Endothelial cell of umbilical vein (primary cell): ENCODE measurements at regions of chr1 and their contacts with region 1.

Region 1: GRCh38 chr1:104322131-104322530 is 572.4 kb downstream of the AMY1C start:
- DNase-seq: no peak
- H3K4me3 ChIP-seq: no peak overlapping the region
- H3K27ac ChIP-seq: no peak overlapping the region
- H3K4me1 ChIP-seq: no peaks in the 10 kb centered on the region
- H3K27me3 ChIP-seq: no peaks in the 10 kb centered on the region
- CTCF ChIP-seq: no peak
- POLR2A ChIP-seq: no peak

Region 2: DNA sequence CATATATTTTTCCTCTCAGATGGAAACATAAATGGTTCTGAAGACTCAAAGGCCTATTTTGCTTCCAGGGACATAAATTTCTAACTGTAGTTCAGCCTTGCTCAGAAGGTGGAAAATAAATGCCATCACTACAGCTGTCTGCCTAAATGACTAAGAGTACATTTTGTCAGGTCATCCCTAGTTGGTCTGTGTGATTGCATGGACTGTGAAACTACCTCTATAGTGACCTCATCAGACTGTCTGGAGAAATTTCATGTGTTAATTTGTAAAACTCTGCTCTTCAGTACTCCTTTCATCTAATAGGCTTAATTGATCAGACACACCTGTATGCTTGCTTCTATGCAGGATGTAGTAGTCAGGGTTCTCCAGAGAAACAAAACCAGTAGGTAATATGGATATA is 314.4 kb after region 1 on chr1:
- CTCF ChIA-PET with region 1: no interaction called
- POLR2A ChIA-PET with region 1: no interaction called
- dilution Hi-C with region 1: no loop called
- intact Hi-C with region 1: loop called (anchors 10 kb)
- DNase-seq: no peak
- H3K4me3 ChIP-seq: no peak overlapping the region
- H3K27ac ChIP-seq: no peak overlapping the region
- H3K4me1 ChIP-seq: no peaks in the 10 kb centered on the region
- H3K27me3 ChIP-seq: no peaks in the 10 kb centered on the region
- CTCF ChIP-seq: no peak
- POLR2A ChIP-seq: no peak

Region 3: GRCh38 chr1:105326883-105327282 is 1004.8 kb after region 1 on chr1:
- CTCF ChIA-PET with region 1: no interaction called
- POLR2A ChIA-PET with region 1: no interaction called
- dilution Hi-C with region 1: no loop called
- intact Hi-C with region 1: no loop called
- DNase-seq: no peak
- H3K4me3 ChIP-seq: no peak overlapping the region
- H3K27ac ChIP-seq: no peak overlapping the region
- H3K4me1 ChIP-seq: no peaks in the 10 kb centered on the region
- H3K27me3 ChIP-seq: no peaks in the 10 kb centered on the region
- CTCF ChIP-seq: no peak
- POLR2A ChIP-seq: no peak